GM10248 (cell line): ENCODE measurements at regions of chr6 and their contacts with region 1.

Region 1: GRCh38 chr6:56902641-56903464 is 52.1 kb upstream of the BEND6 start:
- DNase-seq: peak; percentile 45
- CTCF ChIP-seq: peak; percentile 70

Region 2: GRCh38 chr6:56890683-56891429 is 12.0 kb before region 1 on chr6:
- CTCF ChIA-PET with region 1: interaction called, 91 read pairs
- POLR2A ChIA-PET with region 1: no interaction called
- DNase-seq: peak; percentile 76
- CTCF ChIP-seq: no peak

Region 3: GRCh38 chr6:56927538-56928453 is 24.9 kb after region 1 on chr6:
- CTCF ChIA-PET with region 1: interaction called, 28 read pairs
- POLR2A ChIA-PET with region 1: no interaction called
- DNase-seq: no peak
- CTCF ChIP-seq: no peak

Region 4: DNA sequence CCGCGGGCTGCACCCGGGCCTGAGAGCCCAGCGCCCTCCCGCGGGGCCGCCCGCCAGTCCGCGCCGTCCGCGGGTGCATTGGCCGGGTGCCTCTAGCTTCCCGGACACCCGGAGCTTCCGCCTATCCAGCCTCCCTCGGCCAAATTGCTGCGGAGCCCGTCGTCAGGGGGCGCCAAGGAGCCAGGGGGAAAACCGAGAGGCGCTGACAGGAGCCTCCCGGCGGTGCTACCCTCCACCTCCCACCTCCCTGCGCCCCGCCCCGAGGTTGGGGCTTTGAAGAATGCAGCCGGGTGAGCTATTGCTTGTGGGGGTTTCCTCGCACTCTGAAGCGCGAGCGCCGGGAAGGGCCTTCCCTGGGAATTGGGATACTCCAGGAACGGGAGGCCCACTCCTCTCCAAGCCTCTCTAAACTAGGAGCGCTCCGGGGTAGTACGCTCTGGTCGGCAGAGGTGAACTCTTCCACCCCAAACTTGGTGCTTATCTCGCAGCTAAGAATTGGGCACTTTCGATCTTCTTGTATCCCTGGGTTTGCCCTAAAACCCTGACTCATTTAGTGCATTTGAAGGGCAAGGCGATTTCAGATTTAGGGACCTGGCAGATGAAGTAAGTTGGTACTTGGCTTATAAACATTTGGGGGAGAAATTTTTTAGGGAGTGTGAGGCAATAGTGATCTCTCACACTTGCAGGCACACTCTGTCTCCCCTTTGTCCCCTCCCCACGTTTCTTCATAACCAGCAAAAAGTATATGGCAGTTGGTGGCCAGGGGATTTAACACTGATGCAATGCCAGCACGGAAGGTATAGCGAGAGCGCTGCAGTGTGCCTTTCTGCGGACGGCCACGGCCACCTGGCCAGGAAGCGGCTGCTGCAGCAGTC is 52.6 kb after region 1 on chr6:
- CTCF ChIA-PET with region 1: interaction called, 71 read pairs
- POLR2A ChIA-PET with region 1: no interaction called
- DNase-seq: peak; percentile 85
- CTCF ChIP-seq: peak; percentile 82

Region 5: DNA sequence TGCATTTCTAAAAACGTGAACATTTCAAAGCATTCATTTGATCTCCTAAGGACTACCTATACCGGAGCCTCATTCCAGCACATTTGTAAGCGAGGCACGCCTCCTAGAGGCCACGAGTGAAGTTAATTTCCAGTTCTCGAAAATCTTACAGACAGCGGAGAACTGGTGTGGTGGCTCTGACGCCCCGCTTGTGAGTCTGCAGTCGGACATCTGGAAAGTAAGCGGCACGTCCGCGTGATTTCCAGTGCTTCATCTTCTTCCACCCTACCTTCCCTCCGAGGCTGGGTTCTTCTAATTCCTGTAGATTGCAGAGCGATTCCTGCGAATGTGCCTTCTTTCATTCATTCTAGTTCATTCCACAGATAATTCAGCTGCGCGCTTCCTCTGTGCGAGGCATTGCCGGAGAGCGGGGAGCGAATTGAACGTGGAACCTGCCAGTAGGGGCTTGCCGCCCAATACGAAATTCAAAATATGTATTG is 413.8 kb after region 1 on chr6:
- CTCF ChIA-PET with region 1: interaction called, 101 read pairs
- POLR2A ChIA-PET with region 1: no interaction called
- DNase-seq: peak; percentile 82
- CTCF ChIP-seq: peak; percentile 89